ENCODE measurements at regions of chr2 and their contacts with region 1.

Region 1: GRCh38 chr2:290090-290722 is 2.3 kb upstream of the ALKAL2 start:
- DNase-seq: peak; percentile 81 to 91 (median 88)
- H3K4me3 ChIP-seq: peak overlapping the region in 2 of 4 donors; percentile 39 to 60
- H3K27ac ChIP-seq: peak overlapping the region; percentile 70 to 97 (median 90)
- H3K4me1 ChIP-seq: peaks cover 12 to 18% of the 10 kb centered on the region in 2 donors
- H3K27me3 ChIP-seq: peaks cover 5% of the 10 kb centered on the region
- CTCF ChIP-seq: peak; percentile 59 to 86 (median 84)
- POLR2A ChIP-seq: no peak

Region 2: GRCh38 chr2:169741-170140 is 120.5 kb before region 1 on chr2:
- intact Hi-C with region 1: loop called in 1 of 2 experiments (anchors 5 kb)
- DNase-seq: no peak
- H3K4me3 ChIP-seq: no peak overlapping the region
- H3K27ac ChIP-seq: no peak overlapping the region
- H3K4me1 ChIP-seq: peaks cover 1 to 3% of the 10 kb centered on the region in 2 donors
- H3K27me3 ChIP-seq: no peaks in the 10 kb centered on the region
- CTCF ChIP-seq: no peak
- POLR2A ChIP-seq: no peak

Region 3: GRCh38 chr2:246489-247144 is 43.6 kb before region 1 on chr2:
- intact Hi-C with region 1: loop called in 1 of 2 experiments (anchors 10 kb)
- DNase-seq: peak in 5 of 7 donors; percentile 48 to 58 (median 54)
- H3K4me3 ChIP-seq: no peak overlapping the region
- H3K27ac ChIP-seq: peak overlapping the region in 2 of 5 donors; percentile 17 to 67
- H3K4me1 ChIP-seq: no peaks in the 10 kb centered on the region
- H3K27me3 ChIP-seq: no peaks in the 10 kb centered on the region
- CTCF ChIP-seq: peak; percentile 39 to 74 (median 60)
- POLR2A ChIP-seq: no peak

Region 4: DNA sequence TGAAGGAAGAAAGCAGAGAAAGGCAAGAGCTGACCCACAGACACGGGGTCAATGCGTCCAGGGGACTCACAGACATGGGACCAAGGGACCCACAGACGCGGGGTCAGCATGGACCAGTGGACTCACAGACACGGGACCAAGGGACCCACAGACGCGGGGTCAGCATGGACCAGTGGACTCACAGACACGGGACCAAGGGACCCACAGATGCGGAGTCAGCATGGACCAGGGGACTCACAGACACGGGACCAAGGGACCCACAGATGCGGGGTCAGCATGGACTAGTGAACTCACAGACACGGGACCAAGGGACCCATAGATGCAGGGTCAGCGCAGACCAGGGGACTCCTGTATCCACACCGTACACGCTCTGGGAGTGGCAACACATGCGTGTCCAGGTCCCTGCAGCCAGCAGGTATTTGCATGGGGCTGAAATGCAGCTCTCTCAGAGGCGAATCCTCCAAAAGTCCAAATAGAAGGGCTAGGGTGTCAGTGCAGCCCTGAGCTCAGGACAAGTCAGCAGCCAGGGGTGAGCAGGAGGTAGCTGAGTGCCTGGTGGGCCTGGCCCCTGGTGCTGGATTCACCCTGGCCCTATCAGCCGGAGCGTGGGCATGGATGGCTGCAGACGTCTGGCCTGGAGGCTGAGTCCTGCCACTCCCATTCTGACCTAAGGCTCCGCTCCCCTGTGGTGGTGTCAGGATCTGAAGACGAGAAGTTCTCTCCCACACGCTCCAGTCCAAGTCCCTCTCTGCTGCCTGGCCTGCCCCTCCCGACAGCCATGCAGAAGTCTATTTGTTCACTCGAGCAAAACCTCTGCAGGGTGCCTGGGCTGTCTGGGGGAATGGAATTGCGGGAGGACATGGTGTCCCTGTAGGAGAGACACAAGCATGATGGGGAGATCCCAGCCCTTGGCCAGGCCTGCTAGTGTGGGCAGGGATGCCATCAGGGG is 358.5 kb after region 1 on chr2:
- intact Hi-C with region 1: loop called in 1 of 2 experiments (anchors 10 kb)
- DNase-seq: peak in 1 of 7 donors; percentile 37
- H3K4me3 ChIP-seq: no peak overlapping the region
- H3K27ac ChIP-seq: no peak overlapping the region
- H3K4me1 ChIP-seq: no peaks in the 10 kb centered on the region
- H3K27me3 ChIP-seq: no peaks in the 10 kb centered on the region
- CTCF ChIP-seq: no peak
- POLR2A ChIP-seq: no peak

Region 5: DNA sequence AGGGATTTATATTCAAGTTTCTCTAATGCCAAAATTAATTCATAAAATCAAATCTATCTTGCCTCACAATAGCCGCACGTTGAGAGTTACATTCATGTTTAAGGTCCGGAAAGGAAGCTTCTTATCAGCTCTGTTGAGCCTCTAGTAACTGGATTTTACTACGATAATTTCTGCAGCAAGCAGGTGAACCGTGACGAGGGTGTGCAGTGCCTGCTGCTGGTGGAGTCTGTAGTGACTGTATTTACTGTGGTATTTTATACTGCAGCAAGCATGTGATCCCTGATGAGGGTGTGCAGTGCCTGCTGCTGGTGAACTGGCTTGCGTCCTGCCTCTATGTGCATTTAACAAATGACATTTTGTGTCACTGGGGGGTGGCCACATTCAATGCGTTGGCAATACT is 780.4 kb after region 1 on chr2:
- intact Hi-C with region 1: no loop called
- DNase-seq: no peak
- H3K4me3 ChIP-seq: no peak overlapping the region
- H3K27ac ChIP-seq: no peak overlapping the region
- H3K4me1 ChIP-seq: no peaks in the 10 kb centered on the region
- H3K27me3 ChIP-seq: no peaks in the 10 kb centered on the region
- CTCF ChIP-seq: no peak
- POLR2A ChIP-seq: no peak